H1 (cell line): ENCODE measurements at regions of chr17 and their contacts with region 1.

Region 1: GRCh38 chr17:64129764-64130558 is at the start of gene ERN1:
- DNase-seq: peak; percentile 81 to 91
- H3K4me3 ChIP-seq: peak within 1 kb of the TSS; percentile 69 to 79 (median 74)
- H3K27ac ChIP-seq: no peak within 1 kb of the TSS
- H3K4me1 ChIP-seq: no peaks in the 10 kb centered on the region
- H3K27me3 ChIP-seq: peaks cover 0 to 21% (median 11%) of the 10 kb centered on the region in 4 experiments; a peak in 6 of 7 replicates
- CTCF ChIP-seq: 0 out of 4 replicates have a peak, but pooled peaks of 1 of the 3 experiments have one; percentile 11
- EP300 ChIP-seq: no peak
- POLR2A ChIP-seq: peak; percentile 75 to 76
- RAD21 ChIP-seq: peak in 1 of 2 experiments; percentile 5; a peak in 1 of 4 replicates
- total RNA-seq, gene ERN1: 3.9 and 5.7 TPM in 2 replicates

Region 2: DNA sequence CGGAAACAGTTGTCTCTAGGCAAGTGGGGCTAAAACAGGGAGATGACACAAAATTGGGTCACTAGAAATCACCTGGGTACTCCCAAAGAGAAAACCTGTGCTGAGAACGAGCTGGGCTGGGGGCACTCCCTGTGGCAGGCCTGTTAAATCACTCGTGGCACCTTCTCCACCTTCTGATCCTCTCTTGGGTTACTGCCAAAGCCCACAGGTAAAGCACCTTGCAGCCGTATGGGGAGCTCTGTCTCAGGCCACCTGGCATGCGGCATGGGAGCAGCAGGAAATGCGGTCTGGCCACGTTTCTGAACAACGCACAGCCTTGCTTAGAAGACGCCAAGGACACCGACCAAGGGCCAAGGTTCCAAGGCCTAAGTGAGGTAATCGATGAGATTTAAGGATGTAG is 88.0 kb before region 1 on chr17:
- CTCF ChIA-PET with region 1: interaction called, 11 read pairs
- POLR2A ChIA-PET with region 1: no interaction called
- DNase-seq: no peak
- H3K4me3 ChIP-seq: no peak overlapping the region
- H3K27ac ChIP-seq: no peak overlapping the region
- H3K4me1 ChIP-seq: no peaks in the 10 kb centered on the region
- H3K27me3 ChIP-seq: no peaks in the 10 kb centered on the region
- CTCF ChIP-seq: no peak
- EP300 ChIP-seq: no peak
- POLR2A ChIP-seq: no peak
- RAD21 ChIP-seq: no peak

Region 3: DNA sequence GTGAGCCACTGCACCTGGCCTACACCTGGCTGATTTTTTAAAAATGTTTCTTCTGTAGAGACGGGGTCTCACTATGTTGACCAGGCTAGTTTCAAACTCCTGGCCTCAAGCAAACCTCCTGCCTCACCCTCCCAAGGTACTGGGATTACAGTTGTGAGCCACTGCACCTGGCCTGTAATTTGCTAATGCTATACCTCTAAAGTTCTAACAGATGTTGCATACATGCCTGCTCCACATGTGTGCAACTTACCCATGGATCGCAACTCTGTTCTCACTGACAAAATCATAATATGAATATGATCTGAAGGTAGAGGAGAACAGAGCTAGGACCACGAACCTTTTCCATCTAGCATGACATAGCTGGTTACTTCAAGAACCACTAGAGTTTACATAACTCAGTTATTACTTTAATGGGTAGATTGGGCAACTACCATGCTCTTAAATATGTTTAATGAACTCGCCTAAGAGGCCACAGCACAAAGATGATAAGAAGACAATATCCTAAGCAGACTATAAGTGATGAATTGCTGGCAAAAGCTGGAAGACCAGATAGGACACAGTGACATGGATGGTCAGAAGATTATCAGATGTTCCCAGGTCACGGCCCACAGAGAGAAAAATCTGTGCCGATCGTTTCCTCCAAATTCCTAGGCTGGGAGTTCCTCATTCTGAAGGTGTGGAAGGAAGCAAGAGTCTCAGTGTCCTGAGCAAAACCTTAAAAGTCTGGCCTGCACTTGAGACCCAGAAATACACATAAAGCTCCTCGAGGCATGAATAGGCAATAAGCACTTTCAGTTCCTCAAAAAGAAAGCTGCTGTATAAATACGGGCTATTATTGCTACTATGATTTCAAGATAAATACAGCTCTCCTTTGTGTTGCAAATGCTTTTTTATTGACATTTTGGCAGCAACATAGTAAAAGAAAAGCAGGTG is 55.9 kb before region 1 on chr17:
- CTCF ChIA-PET with region 1: interaction called, 11 read pairs
- POLR2A ChIA-PET with region 1: interaction called, 4 read pairs
- DNase-seq: no peak
- H3K4me3 ChIP-seq: no peak overlapping the region
- H3K27ac ChIP-seq: no peak overlapping the region
- H3K4me1 ChIP-seq: no peaks in the 10 kb centered on the region
- H3K27me3 ChIP-seq: no peaks in the 10 kb centered on the region
- CTCF ChIP-seq: no peak
- EP300 ChIP-seq: no peak
- POLR2A ChIP-seq: no peak
- RAD21 ChIP-seq: no peak

Region 4: GRCh38 chr17:64115871-64116534 is 14.0 kb before region 1 on chr17:
- CTCF ChIA-PET with region 1: interaction called, 19 read pairs
- POLR2A ChIA-PET with region 1: interaction called, 8 read pairs
- DNase-seq: no peak
- H3K4me3 ChIP-seq: no peak overlapping the region
- H3K27ac ChIP-seq: no peak overlapping the region
- H3K4me1 ChIP-seq: no peaks in the 10 kb centered on the region
- H3K27me3 ChIP-seq: no peaks in the 10 kb centered on the region
- CTCF ChIP-seq: no peak
- EP300 ChIP-seq: no peak
- POLR2A ChIP-seq: no peak
- RAD21 ChIP-seq: no peak